ENCODE measurements at regions of chr6 and their contacts with region 1.

Region 1: DNA sequence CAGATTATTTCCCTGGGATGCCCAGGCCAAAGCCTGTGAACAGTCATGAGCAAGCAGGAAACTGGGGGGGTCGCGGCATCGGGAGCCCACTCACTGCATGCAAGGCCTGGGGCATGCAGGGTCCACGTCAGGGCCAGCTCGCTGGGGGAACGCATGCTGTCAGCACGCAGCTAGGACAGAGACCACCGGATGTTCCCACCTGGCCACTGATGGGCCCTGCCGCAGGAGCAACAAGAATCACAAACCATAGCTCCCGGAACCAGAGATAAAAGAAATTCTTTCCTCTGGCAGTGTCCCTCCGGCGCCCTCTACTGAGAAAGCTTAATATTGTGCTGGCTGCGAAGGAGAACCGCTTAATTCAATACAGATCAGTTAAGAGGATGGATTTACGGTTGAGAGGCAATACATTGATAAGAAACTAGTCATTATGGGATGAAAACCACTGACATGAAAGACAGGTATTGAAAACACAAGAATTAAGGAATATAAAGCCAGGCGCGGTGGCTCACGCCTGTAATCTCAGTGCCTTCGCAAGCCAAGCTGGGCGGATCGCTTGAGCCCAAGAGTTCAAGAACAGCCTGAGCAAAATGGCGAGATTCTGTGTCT is 32.6 kb downstream of the C6orf15 start:
- DNase-seq: peak in 3 of 4 donors; percentile 47 to 70 (median 54)
- ATAC-seq: peak; percentile 92
- H3K4me3 ChIP-seq: no peak overlapping the region
- H3K27ac ChIP-seq: no peak overlapping the region
- H3K4me1 ChIP-seq: peaks cover 4% of the 10 kb centered on the region in 2 donors
- H3K27me3 ChIP-seq: no peaks in the 10 kb centered on the region
- CTCF ChIP-seq: peak; percentile 52 to 80

Region 2: GRCh38 chr6:30828027-30828960 is 251.5 kb before region 1 on chr6:
- intact Hi-C with region 1: loop called in 1 of 2 experiments (anchors 10 kb)
- DNase-seq: peak; percentile 77 to 90 (median 86)
- ATAC-seq: peak; percentile 95
- H3K4me3 ChIP-seq: peak overlapping the region in 1 of 2 donors; percentile 4
- H3K27ac ChIP-seq: peak overlapping the region in 1 of 2 donors; percentile 87
- H3K4me1 ChIP-seq: peaks cover 0 to 50% of the 10 kb centered on the region in 2 donors
- H3K27me3 ChIP-seq: no peaks in the 10 kb centered on the region
- CTCF ChIP-seq: peak; percentile 92 to 95

Region 3: DNA sequence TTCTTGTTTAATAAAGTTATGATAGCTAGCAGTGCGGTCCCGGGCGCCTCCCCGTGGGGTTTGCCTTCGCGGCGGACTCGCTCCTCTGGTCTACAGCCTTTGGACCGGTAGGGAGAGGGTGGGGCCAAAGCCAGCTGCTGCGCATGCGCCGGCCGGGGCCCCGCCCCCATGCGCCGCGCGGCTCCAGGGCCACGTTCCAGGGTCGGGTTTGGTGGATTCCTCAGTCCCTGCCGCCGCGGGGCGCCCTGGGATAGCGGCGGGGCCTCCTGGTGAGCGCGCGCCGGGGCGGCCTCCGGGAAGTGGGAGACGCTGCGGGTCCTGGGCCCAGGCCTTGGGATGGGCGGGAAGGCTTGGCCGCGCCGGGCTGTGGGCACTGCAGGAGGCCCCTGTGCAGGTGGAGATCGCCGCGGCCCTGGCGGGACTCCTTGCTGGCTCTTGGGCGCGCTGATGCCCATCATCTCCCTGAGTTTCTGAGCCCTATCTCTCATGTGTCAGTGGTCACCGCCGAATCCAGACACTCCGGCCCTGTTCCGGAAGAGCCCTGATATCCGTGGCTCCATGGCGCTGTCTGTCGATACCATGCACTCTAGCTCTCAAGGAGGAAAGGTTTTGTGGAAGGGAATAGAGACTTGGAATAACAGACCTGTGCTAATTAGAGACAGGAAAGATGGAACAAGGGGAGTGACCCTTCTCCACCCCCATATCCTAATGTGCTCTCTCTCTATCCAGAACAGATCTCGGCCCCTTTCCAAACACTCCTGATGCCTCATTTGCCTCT is 165.5 kb before region 1 on chr6 and contains the start of gene VARS2:
- intact Hi-C with region 1: loop called in 1 of 2 experiments (anchors 10 kb)
- DNase-seq: peak; percentile 92 to 97 (median 96)
- ATAC-seq: peak; percentile 92
- H3K4me3 ChIP-seq: peak within 1 kb of the TSS; percentile 60 to 62
- H3K27ac ChIP-seq: peak within 1 kb of the TSS; percentile 82 to 93
- H3K4me1 ChIP-seq: peaks cover 21 to 35% of the 10 kb centered on the region in 2 donors
- H3K27me3 ChIP-seq: no peaks in the 10 kb centered on the region
- CTCF ChIP-seq: peak; percentile 14 to 39
- polyA plus RNA-seq, gene VARS2: 42.3 to 54.3 (median 46.9) TPM

Region 4: GRCh38 chr6:30960907-30961673 is 118.7 kb before region 1 on chr6:
- intact Hi-C with region 1: no loop called
- DNase-seq: no peak
- ATAC-seq: peak; percentile 92
- H3K4me3 ChIP-seq: no peak overlapping the region
- H3K27ac ChIP-seq: peak overlapping the region; percentile 24 to 33
- H3K4me1 ChIP-seq: peaks cover 2 to 4% of the 10 kb centered on the region in 2 donors
- H3K27me3 ChIP-seq: peaks cover 0 to 36% of the 10 kb centered on the region in 2 donors
- CTCF ChIP-seq: no peak

Region 5: GRCh38 chr6:31525932-31526591 is 446.3 kb after region 1 on chr6:
- intact Hi-C with region 1: no loop called
- DNase-seq: no peak
- ATAC-seq: peak; percentile 57
- H3K4me3 ChIP-seq: no peak overlapping the region
- H3K27ac ChIP-seq: peak overlapping the region in 1 of 2 donors; percentile 50
- H3K4me1 ChIP-seq: peaks cover 0 to 2% of the 10 kb centered on the region in 2 donors
- H3K27me3 ChIP-seq: no peaks in the 10 kb centered on the region
- CTCF ChIP-seq: no peak

Measured in left lung (tissue), 14 donors.